ENCODE measurements at regions of chr15 and their contacts with region 1.

Region 1: DNA sequence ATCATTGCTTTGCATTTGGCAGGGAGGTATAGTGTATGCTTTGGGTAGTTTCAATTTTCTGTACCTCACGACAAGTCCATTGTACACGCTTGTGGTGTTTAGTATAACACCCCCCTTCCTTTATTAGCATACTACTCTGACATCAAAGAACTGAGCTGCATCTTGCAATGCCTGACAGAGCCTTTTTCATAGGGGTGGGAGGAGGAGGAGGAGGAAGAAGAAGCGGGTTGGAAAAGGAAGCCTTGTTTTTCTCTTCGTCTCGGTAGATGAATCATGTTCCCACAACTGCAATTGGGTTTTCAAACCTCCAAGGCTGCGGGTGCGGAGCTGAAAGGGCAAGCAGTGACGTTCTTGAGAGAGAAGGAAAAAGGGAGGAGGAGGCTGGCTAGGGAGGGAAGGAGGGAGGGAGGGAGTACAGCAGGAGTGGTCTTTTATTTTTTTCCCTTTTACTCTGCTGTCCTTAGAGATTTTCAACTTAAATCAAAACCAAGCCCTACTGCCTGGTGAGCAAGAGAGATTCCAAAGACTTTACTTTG is 175.7 kb downstream of the KLHL25 start:
- DNase-seq: peak; percentile 68 to 94
- H3K4me3 ChIP-seq: peak overlapping the region; percentile 58 to 74
- H3K27ac ChIP-seq: peak overlapping the region; percentile 85 to 86
- H3K4me1 ChIP-seq: peaks cover 16 to 36% of the 10 kb centered on the region in 2 donors
- H3K27me3 ChIP-seq: no peaks in the 10 kb centered on the region
- CTCF ChIP-seq: no peak

Region 2: GRCh38 chr15:84826369-84826823 is 792.6 kb before region 1 on chr15:
- intact Hi-C with region 1: no loop called
- DNase-seq: peak in 1 of 2 donors; percentile 61
- H3K4me3 ChIP-seq: no peak overlapping the region
- H3K27ac ChIP-seq: peak overlapping the region in 1 of 2 donors; percentile 57
- H3K4me1 ChIP-seq: peaks cover 5 to 44% of the 10 kb centered on the region in 2 donors
- H3K27me3 ChIP-seq: no peaks in the 10 kb centered on the region
- CTCF ChIP-seq: no peak

Region 3: GRCh38 chr15:85494048-85494793 is 124.8 kb before region 1 on chr15:
- intact Hi-C with region 1: no loop called
- DNase-seq: no peak
- H3K4me3 ChIP-seq: no peak overlapping the region
- H3K27ac ChIP-seq: no peak overlapping the region
- H3K4me1 ChIP-seq: no peaks in the 10 kb centered on the region
- H3K27me3 ChIP-seq: no peaks in the 10 kb centered on the region
- CTCF ChIP-seq: no peak

Region 4: DNA sequence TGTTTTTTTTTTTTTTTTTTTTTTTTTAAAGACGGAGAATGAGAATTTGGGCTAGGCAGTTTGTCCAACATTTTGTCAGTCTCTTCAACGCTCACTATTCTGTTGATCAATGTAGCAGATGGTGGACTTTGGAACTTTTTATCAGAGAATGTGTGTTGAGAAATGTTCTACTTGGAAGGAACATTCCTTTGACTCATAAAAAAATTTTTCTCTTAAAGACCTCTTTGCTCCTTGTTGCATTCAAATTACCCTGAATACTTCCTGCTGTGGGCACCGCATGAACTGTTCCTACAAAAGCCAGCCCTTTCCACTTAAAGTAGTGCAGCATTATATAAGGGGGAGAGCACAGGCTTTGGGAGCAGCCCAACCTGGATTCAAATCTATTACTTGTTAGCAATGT is 55.7 kb before region 1 on chr15:
- intact Hi-C with region 1: loop called (anchors 5 kb)
- DNase-seq: no peak
- H3K4me3 ChIP-seq: no peak overlapping the region
- H3K27ac ChIP-seq: peak overlapping the region; percentile 57 to 62
- H3K4me1 ChIP-seq: peaks cover 0 to 15% of the 10 kb centered on the region in 2 donors
- H3K27me3 ChIP-seq: no peaks in the 10 kb centered on the region
- CTCF ChIP-seq: no peak

Region 5: GRCh38 chr15:85582131-85583079 is 36.6 kb before region 1 on chr15:
- intact Hi-C with region 1: loop called (anchors 5 kb)
- DNase-seq: peak in 1 of 2 donors; percentile 79
- H3K4me3 ChIP-seq: peak overlapping the region; percentile 35 to 55
- H3K27ac ChIP-seq: peak overlapping the region; percentile 78 to 83
- H3K4me1 ChIP-seq: peaks cover 11 to 56% of the 10 kb centered on the region in 2 donors
- H3K27me3 ChIP-seq: no peaks in the 10 kb centered on the region
- CTCF ChIP-seq: no peak

Region 6: DNA sequence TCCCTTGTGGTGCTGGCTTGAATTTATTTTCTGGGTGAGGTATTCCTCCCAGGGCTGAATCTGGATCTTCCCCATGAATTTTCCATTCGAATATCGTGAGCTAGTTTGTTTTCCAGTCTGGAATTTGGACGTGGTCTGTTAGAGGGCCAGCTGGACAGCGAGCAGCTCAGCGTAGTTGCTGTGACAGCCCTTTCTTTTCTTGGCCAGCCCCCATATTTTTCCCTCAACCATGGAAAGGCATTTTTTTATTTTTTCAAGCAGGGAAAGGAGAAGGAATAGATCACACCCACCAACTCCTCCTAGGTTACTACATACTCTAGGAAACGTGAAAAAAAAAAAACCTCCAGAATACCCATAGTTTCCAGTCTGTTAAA is 23.7 kb after region 1 on chr15:
- intact Hi-C with region 1: loop called (anchors 1 kb)
- DNase-seq: peak in 1 of 2 donors; percentile 84
- H3K4me3 ChIP-seq: peak overlapping the region; percentile 31 to 54
- H3K27ac ChIP-seq: peak overlapping the region; percentile 88 to 90
- H3K4me1 ChIP-seq: peaks cover 0 to 44% of the 10 kb centered on the region in 2 donors
- H3K27me3 ChIP-seq: no peaks in the 10 kb centered on the region
- CTCF ChIP-seq: peak in 1 of 3 experiments; percentile 8

Region 7: GRCh38 chr15:85667491-85668424 is 48.7 kb after region 1 on chr15:
- intact Hi-C with region 1: loop called (anchors 1 kb)
- DNase-seq: peak in 1 of 2 donors; percentile 87
- H3K4me3 ChIP-seq: peak overlapping the region in 1 of 2 donors; percentile 28
- H3K27ac ChIP-seq: peak overlapping the region; percentile 92 to 93
- H3K4me1 ChIP-seq: peaks cover 15 to 23% of the 10 kb centered on the region in 2 donors
- H3K27me3 ChIP-seq: no peaks in the 10 kb centered on the region
- CTCF ChIP-seq: no peak

Measured in ascending aorta (tissue), 2 donors.